ENCODE measurements at regions of chr14 and their contacts with region 1.

Region 1: GRCh38 chr14:62914025-62914424 is 131.2 kb downstream of the KCNH5 start:
- DNase-seq: no peak
- H3K4me3 ChIP-seq: no peak overlapping the region
- H3K27ac ChIP-seq: no peak overlapping the region
- H3K4me1 ChIP-seq: no peaks in the 10 kb centered on the region
- H3K27me3 ChIP-seq: no peaks in the 10 kb centered on the region
- CTCF ChIP-seq: no peak
- POLR2A ChIP-seq: no peak

Region 2: DNA sequence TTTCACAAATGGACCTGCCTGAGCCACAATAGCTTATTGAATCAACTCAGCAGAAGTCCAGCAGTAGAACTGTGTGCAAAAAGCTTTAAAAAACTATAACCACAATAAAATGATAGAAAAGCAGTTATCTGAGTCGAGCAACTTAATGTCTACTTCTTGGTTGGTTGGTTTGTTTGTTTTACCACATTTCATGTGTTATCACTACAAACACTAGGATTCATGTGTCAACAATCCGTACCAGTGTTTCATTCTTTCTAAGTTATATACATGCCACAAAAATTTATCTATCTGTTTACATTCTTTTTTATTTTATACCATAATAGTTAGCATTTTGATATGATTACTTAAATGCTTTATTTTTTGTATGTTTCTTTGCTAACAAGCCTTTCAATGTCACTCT is 207.8 kb before region 1 on chr14:
- intact Hi-C with region 1: no loop called
- DNase-seq: no peak
- H3K4me3 ChIP-seq: no peak overlapping the region
- H3K27ac ChIP-seq: no peak overlapping the region
- H3K4me1 ChIP-seq: no peaks in the 10 kb centered on the region
- H3K27me3 ChIP-seq: no peaks in the 10 kb centered on the region
- CTCF ChIP-seq: no peak
- POLR2A ChIP-seq: no peak

Region 3: GRCh38 chr14:62957562-62957961 is 43.5 kb after region 1 on chr14:
- intact Hi-C with region 1: no loop called
- DNase-seq: no peak
- H3K4me3 ChIP-seq: no peak overlapping the region
- H3K27ac ChIP-seq: no peak overlapping the region
- H3K4me1 ChIP-seq: no peaks in the 10 kb centered on the region
- H3K27me3 ChIP-seq: no peaks in the 10 kb centered on the region
- CTCF ChIP-seq: no peak
- POLR2A ChIP-seq: no peak

Region 4: DNA sequence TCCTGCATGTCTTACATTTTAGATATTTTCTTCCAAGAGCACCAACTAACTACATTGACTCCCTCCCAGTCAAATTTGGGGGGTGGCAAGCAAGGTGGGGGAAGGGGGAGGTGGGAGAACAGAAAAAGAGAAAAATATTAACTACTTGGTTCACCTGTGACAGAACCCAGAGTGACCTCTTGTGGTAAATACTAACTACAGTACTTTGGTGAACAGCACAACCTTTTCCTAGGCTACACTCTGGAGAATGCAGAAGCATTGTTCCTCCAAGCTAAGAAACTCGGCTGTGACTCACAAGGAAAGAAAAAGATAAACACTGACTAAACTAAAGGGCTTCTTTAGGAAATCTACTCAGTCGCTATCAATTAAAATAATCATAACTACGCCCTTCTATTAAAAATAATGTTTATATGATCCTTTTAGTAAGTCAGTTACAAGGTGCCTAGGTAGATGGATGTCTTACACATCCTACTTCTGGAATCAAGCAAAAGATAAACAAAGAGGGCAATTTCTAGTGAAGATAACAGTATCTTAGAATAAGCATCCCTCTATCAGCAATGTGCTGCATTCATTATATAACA is 125.9 kb after region 1 on chr14:
- intact Hi-C with region 1: loop called (anchors 10 kb)
- DNase-seq: no peak
- H3K4me3 ChIP-seq: no peak overlapping the region
- H3K27ac ChIP-seq: no peak overlapping the region
- H3K4me1 ChIP-seq: peaks cover 1% of the 10 kb centered on the region
- H3K27me3 ChIP-seq: no peaks in the 10 kb centered on the region
- CTCF ChIP-seq: peak in 1 of 4 experiments; percentile 19
- POLR2A ChIP-seq: no peak

Measured in prostate gland (tissue), 2 donors.